HCT116 (cell line): ENCODE measurements at regions of chr14 and their contacts with region 1.

Region 1: DNA sequence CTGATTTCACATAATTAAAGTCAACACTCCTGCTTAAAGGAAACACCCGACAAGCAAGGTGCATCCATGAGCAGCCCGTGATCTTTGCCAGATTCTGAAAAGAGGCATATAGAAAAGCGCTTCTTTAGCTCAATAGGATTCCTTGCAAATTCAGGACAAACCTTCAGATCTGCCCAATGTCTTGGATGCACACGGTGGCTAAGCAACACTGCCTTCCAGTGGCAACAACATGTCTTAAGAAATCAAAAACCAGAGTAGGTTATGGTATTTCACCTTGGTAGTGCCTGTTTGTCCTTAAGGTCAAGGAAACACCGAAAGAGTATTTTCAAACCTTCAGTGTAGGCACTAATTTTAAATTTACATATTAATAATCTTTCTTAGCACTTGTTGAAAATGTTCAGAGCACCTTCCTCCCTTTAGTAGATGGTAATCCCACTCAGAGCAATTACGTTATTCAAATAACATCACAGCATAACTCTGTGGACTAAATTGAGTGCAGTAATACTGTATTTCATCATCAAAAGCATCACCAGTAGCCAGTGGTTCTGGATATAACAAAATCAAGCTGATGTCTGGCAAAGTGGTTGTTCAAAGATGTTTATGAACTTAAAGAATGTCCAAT is 58.0 kb upstream of the CDKN3 start:
- DNase-seq: peak; percentile 55
- ATAC-seq: peak; percentile 86
- H3K4me3 ChIP-seq: no peak overlapping the region
- H3K27ac ChIP-seq: no peak overlapping the region; the same call in 1 of the 2 replicates
- H3K4me1 ChIP-seq: peaks cover 18 to 32% of the 10 kb centered on the region in 2 experiments
- H3K27me3 ChIP-seq: no peaks in the 10 kb centered on the region
- CTCF ChIP-seq: peak; percentile 62 to 75 (median 71); a peak in 5 of 6 replicates
- POLR2A ChIP-seq: no peak
- RAD21 ChIP-seq: peak; percentile 95

Region 2: GRCh38 chr14:53929871-53930715 is 408.7 kb before region 1 on chr14:
- CTCF ChIA-PET with region 1: interaction called, 3 read pairs
- POLR2A ChIA-PET with region 1: no interaction called
- RAD21 ChIA-PET with region 1: no interaction called
- intact Hi-C with region 1: loop called (anchors 5 kb)
- DNase-seq: peak; percentile 37
- ATAC-seq: peak; percentile 92
- H3K4me3 ChIP-seq: no peak overlapping the region
- H3K27ac ChIP-seq: no peak overlapping the region
- H3K4me1 ChIP-seq: peaks cover 5 to 14% of the 10 kb centered on the region in 2 experiments; a peak in 2 of 4 replicates
- H3K27me3 ChIP-seq: no peaks in the 10 kb centered on the region
- CTCF ChIP-seq: peak; percentile 81 to 96 (median 87)
- POLR2A ChIP-seq: no peak
- RAD21 ChIP-seq: peak; percentile 67

Region 3: DNA sequence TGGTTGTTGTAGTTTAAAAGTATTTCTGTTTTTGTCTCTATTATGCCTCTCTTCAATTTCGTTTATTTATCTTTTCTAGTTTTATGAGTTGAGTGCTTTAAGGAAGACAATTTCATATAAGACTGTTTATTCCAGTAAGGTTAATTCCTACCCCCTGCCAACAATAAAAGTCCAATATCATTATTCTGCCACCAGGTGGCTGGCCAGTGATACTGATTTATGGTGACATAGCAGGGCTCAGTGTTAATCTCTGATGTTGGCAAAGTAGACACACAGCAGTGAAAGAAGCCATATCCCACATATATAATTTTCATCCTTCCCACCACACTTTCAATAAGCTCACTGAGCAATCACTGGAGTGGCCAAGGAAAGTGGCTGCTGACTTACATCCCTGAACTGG is 313.1 kb before region 1 on chr14:
- CTCF ChIA-PET with region 1: no interaction called
- POLR2A ChIA-PET with region 1: no interaction called
- RAD21 ChIA-PET with region 1: no interaction called
- intact Hi-C with region 1: loop called (anchors 1 kb)
- DNase-seq: peak; percentile 43
- ATAC-seq: peak; percentile 93
- H3K4me3 ChIP-seq: no peak overlapping the region
- H3K27ac ChIP-seq: no peak overlapping the region
- H3K4me1 ChIP-seq: no peaks in the 10 kb centered on the region; a peak in 1 of 4 replicates
- H3K27me3 ChIP-seq: no peaks in the 10 kb centered on the region
- CTCF ChIP-seq: peak; percentile 55 to 68 (median 59); a peak in 5 of 6 replicates
- POLR2A ChIP-seq: no peak
- RAD21 ChIP-seq: peak; percentile 79